ENCODE measurements at regions of chrX and their contacts with region 1.

Region 1: DNA sequence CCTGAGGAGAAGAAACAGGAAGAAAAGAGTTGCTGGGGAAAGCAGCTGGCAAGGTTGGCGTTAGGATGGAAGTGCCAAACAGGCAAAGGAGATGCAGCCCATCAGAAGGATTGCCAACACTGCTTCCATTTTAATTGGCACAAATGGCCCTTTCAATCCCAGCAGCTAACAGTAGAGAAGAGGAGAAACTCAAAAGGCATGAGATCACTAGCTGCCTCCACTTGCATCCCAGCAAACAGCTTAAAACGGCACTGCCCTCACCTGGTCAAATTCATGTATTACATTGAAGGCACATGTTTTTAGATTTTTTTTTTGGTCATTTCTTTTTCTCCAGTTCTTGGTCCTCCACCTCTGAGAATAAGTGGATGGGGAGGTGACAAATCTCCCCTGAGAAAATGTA is 14.9 kb upstream of the LOC101059915 start:
- DNase-seq: peak; percentile 70
- H3K4me3 ChIP-seq: no peak overlapping the region
- H3K27ac ChIP-seq: no peak overlapping the region
- H3K4me1 ChIP-seq: peaks cover 9% of the 10 kb centered on the region
- CTCF ChIP-seq: peak; percentile 80

Region 2: DNA sequence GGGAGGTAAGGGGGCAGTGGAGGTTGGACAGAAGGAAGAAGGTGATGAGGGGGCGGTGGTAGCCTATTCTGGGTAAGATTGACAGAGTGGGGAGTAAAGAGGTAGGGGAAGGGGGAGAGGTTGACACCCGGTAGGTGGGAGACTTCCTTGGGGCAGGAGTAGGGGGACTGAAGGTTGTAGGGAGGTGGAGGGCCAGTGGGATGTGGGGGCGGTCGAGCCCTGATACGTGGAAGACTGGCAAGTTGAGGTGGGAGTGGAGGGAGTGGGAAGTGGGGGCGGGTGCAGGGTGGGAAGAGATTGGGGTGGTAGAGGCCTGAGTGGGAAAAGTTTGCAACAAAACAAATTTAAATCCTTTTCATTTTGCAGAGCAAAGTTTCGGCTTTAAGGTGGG is 72.4 kb before region 1 on chrX:
- CTCF ChIA-PET with region 1: no interaction called
- POLR2A ChIA-PET with region 1: no interaction called
- intact Hi-C with region 1: loop called (anchors 5 kb)
- DNase-seq: no peak
- H3K4me3 ChIP-seq: no peak overlapping the region
- H3K27ac ChIP-seq: no peak overlapping the region
- H3K4me1 ChIP-seq: no peaks in the 10 kb centered on the region
- CTCF ChIP-seq: no peak

Region 3: DNA sequence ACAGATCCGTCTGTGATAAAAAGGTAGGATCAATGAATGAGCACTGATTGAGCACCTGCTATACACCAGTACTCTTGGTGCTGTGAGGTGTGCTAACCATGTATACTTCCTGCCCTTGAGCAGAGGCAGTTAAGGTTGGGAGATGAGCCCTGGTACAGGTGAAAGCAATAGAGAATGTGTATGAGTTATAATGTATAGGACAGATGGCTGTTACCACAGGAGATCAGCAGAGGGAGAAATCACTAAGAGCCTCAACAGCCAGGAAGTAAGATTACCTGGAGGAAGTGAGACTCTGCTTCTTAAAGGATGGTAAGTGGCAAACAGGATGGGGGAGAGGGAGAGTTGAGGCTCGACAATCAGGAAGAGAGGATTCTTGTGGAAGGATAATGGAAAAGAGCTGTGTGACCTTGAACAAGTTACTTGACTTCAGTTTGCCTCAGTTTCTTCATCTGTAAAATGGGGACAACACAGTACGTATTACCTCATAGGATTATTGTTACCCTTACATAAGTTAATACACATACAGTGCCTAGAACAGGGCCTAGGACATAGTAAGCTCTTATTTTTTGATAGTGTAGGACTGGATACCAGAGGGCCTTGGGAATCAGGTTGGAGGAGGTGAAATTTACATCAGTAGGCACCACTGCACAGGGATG is 43.2 kb before region 1 on chrX:
- CTCF ChIA-PET with region 1: no interaction called
- POLR2A ChIA-PET with region 1: interaction called, 3 read pairs
- intact Hi-C with region 1: loop called (anchors 1 kb)
- DNase-seq: peak; percentile 59
- H3K4me3 ChIP-seq: no peak overlapping the region
- H3K27ac ChIP-seq: peak overlapping the region; percentile 30
- H3K4me1 ChIP-seq: peaks cover 27% of the 10 kb centered on the region
- CTCF ChIP-seq: peak; percentile 49

Region 4: GRCh38 chrX:71622576-71623450 is 29.6 kb before region 1 on chrX:
- CTCF ChIA-PET with region 1: no interaction called
- POLR2A ChIA-PET with region 1: no interaction called
- intact Hi-C with region 1: loop called (anchors 2 kb)
- DNase-seq: peak; percentile 76
- H3K4me3 ChIP-seq: peak overlapping the region; percentile 25
- H3K27ac ChIP-seq: peak overlapping the region; percentile 73
- H3K4me1 ChIP-seq: peaks cover 71% of the 10 kb centered on the region
- CTCF ChIP-seq: no peak

Region 5: DNA sequence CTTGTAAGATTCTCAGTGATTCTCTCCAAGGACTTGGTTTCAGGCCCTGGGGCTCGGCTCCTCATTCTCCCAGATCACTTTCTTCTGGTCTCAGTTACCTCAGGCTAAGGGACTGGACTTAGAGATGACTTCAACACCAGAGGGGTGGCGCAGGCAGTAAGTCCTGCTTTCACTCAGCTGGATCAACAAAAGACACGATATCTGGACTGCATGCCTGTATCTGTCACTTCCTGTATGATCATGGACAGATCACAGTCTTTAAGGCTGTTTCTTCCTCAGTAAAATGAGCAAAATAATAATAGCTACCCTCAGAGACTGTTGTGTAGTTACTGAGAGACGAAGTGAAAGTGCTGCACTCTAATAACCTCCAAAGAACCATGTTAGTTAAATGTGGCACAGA is 14.6 kb before region 1 on chrX:
- CTCF ChIA-PET with region 1: no interaction called
- POLR2A ChIA-PET with region 1: no interaction called
- intact Hi-C with region 1: no loop called
- DNase-seq: peak; percentile 24
- H3K4me3 ChIP-seq: peak overlapping the region; percentile 29
- H3K27ac ChIP-seq: peak overlapping the region; percentile 39
- H3K4me1 ChIP-seq: peaks cover 25% of the 10 kb centered on the region
- CTCF ChIP-seq: no peak

Measured in OCI-LY7 (cell line).